Dorsolateral prefrontal cortex (tissue), 120 donors: ENCODE measurements at regions of chr6 and their contacts with region 1.

Region 1: DNA sequence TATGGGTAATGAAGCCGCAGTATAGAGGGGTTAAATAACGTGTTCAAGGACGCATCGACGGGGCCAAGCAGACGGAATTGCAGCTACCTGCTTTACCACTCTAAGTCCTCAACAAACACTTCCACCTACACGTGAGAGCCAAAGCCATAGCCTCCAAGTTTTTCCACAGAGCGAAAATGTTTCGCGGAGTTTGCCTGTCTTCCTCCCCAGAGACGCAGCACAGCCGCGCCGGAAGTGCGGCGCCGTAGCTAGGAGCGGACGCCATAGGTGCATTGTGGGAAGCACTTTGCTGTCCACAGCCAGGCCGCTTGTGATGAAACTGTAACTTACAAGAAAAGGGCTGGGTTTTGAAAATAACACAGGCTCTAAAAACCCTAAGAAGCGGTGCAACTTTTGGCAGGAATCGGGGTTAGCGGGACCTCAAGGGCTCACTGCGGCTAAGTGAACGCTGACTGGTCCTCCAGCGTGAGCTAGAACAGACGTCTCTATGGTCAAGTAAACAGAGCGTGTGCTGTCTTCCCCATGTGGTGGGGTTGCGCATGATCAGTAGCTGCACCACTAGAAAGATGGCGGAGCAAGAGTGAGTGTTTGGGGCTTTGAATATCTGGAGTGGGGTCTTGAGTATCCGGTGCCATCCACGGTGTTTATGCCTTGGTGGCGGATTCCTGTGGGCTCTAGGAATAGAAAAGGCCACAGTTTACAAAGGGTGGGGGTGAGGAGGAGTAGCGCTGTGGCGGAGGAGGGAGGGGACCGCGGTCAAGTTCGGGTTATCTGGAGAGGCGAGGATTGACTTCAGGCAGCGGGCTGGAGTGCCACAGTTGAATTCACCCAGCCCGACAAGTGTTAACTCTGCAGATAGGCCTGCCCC is at the start of gene RPL7L1:
- DNase-seq: peak; percentile 79 to 92 (median 88)
- H3K4me3 ChIP-seq: peak within 1 kb of the TSS; percentile 56 to 96 (median 79)
- H3K27ac ChIP-seq: peak within 1 kb of the TSS; percentile 84 to 99 (median 97)
- H3K27me3 ChIP-seq: no peaks in the 10 kb centered on the region
- CTCF ChIP-seq: peak in 37 of 56 donors; percentile 6 to 58 (median 26)
- total RNA-seq, gene RPL7L1: 50.3 to 97.8 (median 77.4) TPM

Region 2: GRCh38 chr6:42075159-42075838 is 804.3 kb before region 1 on chr6:
- intact Hi-C with region 1: loop called in 1 of 2 experiments (anchors 10 kb)
- DNase-seq: peak; percentile 52 to 78 (median 68)
- H3K4me3 ChIP-seq: no peak overlapping the region
- H3K27ac ChIP-seq: peak overlapping the region in 1 of 59 donors; percentile 27
- H3K27me3 ChIP-seq: no peaks in the 10 kb centered on the region
- CTCF ChIP-seq: peak; percentile 38 to 83 (median 72)

Region 3: GRCh38 chr6:42563697-42564505 is 315.7 kb before region 1 on chr6 and contains the start of gene UBR2:
- intact Hi-C with region 1: loop called in 1 of 2 experiments (anchors 5 kb)
- DNase-seq: peak; percentile 90 to 99 (median 98)
- H3K4me3 ChIP-seq: peak within 1 kb of the TSS; percentile 57 to 100 (median 92)
- H3K27ac ChIP-seq: peak within 1 kb of the TSS; percentile 69 to 100 (median 97)
- H3K27me3 ChIP-seq: no peaks in the 10 kb centered on the region
- CTCF ChIP-seq: peak in 55 of 56 donors; percentile 29 to 86 (median 67)
- total RNA-seq, gene UBR2: 29.5 to 56.9 (median 37.2) TPM

Region 4: GRCh38 chr6:42661540-42662153 is 218.0 kb before region 1 on chr6:
- intact Hi-C with region 1: loop called (anchors 1 to 5 kb)
- DNase-seq: peak; percentile 61 to 90 (median 74)
- H3K4me3 ChIP-seq: no peak overlapping the region
- H3K27ac ChIP-seq: peak overlapping the region in 4 of 59 donors; percentile 3 to 54 (median 20)
- H3K27me3 ChIP-seq: no peaks in the 10 kb centered on the region
- CTCF ChIP-seq: peak; percentile 67 to 98 (median 91)

Region 5: GRCh38 chr6:42726485-42727086 is 153.0 kb before region 1 on chr6:
- intact Hi-C with region 1: loop called in 1 of 2 experiments (anchors 5 kb)
- DNase-seq: peak in 9 of 10 donors; percentile 56 to 83 (median 70)
- H3K4me3 ChIP-seq: peak overlapping the region; percentile 39 to 76 (median 62)
- H3K27ac ChIP-seq: peak overlapping the region in 55 of 59 donors; percentile 6 to 91 (median 70)
- H3K27me3 ChIP-seq: no peaks in the 10 kb centered on the region
- CTCF ChIP-seq: peak; percentile 77 to 98 (median 92)

Region 6: GRCh38 chr6:42745707-42746462 is 133.7 kb before region 1 on chr6 and contains the start of gene TBCC:
- intact Hi-C with region 1: loop called (anchors 5 kb)
- DNase-seq: peak; percentile 88 to 99 (median 98)
- H3K4me3 ChIP-seq: peak within 1 kb of the TSS; percentile 62 to 100 (median 96)
- H3K27ac ChIP-seq: peak within 1 kb of the TSS; percentile 86 to 99 (median 96)
- H3K27me3 ChIP-seq: no peaks in the 10 kb centered on the region
- CTCF ChIP-seq: peak in 5 of 56 donors; percentile 7 to 23 (median 14)
- total RNA-seq, gene TBCC: 12.9 to 35.3 (median 26.6) TPM

Region 7: DNA sequence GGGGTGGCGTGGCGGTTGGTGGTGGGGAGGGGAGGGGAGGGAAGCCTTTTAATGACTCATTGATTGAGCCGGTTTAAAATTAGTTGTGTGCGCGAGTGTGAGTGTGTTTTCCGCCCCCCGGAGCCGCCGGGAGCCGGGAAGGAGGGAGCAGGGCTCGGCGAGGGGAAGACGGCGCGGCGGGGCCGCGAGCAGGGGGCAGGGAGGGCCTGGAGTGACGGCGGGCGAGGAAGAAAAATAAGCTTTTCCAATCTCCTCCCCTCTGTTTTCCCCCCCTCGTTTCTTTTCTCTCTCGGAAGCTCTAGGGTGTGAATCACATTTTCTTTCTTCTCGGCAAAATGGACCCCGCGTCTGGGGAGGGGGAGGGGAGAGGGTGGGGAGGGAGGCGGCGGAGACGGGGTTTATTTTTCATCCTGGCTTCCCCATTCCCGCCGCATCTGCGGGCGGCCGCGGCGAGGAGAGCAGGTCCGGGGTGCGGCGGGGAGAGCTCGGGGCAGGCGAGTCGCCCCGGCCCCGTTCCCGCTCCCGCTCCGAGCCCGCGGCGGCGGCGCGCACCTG is 96.9 kb before region 1 on chr6:
- intact Hi-C with region 1: loop called (anchors 2 to 5 kb)
- DNase-seq: peak; percentile 51 to 86 (median 75)
- H3K4me3 ChIP-seq: peak overlapping the region; percentile 61 to 98 (median 87)
- H3K27ac ChIP-seq: peak overlapping the region; percentile 99 to 100 (median 100)
- H3K27me3 ChIP-seq: no peaks in the 10 kb centered on the region
- CTCF ChIP-seq: no peak

Region 8: GRCh38 chr6:42808492-42809483 is 70.8 kb before region 1 on chr6:
- intact Hi-C with region 1: no loop called
- DNase-seq: no peak
- H3K4me3 ChIP-seq: no peak overlapping the region
- H3K27ac ChIP-seq: peak overlapping the region in 6 of 59 donors; percentile 1 to 55 (median 28)
- H3K27me3 ChIP-seq: no peaks in the 10 kb centered on the region
- CTCF ChIP-seq: no peak